GM13976 (cell line): ENCODE measurements at regions of chr4 and their contacts with region 1.

Region 1: DNA sequence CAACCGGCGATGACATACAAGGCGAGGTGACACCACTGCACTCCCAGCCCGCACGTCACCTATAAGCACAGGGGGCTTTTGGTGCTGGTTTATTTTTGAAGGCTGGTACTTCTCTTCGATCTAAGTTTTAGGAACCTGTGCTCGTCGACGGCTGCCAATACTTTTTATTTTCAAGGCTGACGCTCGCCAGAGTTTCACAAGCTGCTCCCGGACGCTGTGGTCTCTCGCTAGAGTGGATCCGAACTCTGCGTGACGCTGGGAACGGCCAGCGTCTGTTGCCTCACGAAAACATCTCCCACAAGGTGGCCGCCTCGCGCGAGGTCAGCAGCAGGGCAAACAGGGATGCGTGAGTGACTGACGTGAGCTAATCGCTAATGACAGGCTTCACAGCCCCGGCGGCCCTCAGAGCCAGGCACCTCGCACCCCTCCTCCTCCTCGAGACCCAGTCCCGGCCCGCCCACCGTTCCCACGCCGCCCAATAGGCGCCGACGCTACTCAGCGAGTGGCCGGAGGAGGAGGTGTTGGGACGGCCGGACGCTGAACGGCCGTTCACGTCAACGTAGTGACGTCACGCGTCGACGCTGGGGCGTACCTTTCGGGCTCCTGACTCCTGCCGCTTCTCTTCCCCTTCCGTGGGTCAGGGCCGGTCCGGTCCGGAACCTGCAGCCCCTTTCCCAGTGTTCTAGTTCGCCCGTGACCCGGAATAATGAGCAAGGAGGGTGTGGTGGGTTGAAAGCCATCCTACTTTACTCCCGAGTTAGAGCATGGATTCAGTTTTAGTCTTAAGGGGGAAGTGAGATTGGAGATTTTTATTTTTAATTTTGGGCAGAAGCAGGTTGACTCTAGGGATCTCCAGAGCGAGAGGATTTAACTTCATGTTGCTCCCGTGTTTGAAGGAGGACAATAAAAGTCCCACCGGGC is at the start of gene CLCN3:
- DNase-seq: peak; percentile 95
- CTCF ChIP-seq: no peak

Region 2: GRCh38 chr4:170027181-170027829 is 407.1 kb after region 1 on chr4:
- in situ Hi-C with region 1: loop called (anchors 25 kb)
- DNase-seq: peak; percentile 91
- CTCF ChIP-seq: no peak